BJ (cell line): ENCODE measurements at regions of chr1 and their contacts with region 1.

Region 1: DNA sequence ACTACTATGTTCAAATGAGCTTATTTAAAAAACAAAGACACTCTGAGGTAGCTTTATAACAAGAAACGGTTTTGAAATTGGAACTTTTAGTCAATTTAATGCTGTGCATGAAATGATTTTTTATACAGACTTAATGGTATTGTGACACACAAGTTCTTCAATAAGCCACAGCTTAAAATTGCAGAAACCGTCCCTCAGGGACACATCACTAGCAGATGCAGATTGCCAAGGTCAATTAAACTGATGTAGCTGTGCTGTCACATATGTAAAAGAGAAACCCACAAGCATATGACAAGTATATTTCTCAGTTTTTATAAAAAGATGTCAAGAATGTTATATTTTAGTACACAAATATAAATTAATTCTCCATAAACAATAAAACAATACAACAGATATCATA is 366.9 kb downstream of the DPYD start:
- DNase-seq: no peak
- H3K4me3 ChIP-seq: no peak overlapping the region
- H3K27me3 ChIP-seq: no peaks in the 10 kb centered on the region
- CTCF ChIP-seq: no peak

Region 2: DNA sequence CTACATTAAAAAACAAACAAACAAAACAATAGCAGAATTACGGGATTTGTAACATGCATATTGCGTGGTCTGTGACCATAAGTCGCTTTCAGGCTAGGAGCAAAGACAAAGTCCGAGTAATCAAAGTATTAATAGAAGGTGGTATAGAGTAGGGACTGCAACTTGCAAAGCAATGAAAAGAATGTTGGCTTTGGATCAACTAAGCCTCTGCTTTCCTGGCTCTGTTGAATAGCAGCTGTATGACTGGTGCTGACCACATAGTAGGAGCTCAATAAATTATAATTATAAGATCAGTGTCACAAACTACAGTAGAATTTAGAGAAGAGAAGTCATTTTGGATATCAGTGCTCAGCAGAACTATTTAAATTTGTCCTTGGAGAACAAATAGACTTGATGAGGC is 219.5 kb before region 1 on chr1:
- CTCF ChIA-PET with region 1: no interaction called
- POLR2A ChIA-PET with region 1: interaction called, 17 read pairs
- DNase-seq: peak; percentile 54
- H3K4me3 ChIP-seq: no peak overlapping the region
- H3K27me3 ChIP-seq: no peaks in the 10 kb centered on the region
- CTCF ChIP-seq: no peak

Region 3: GRCh38 chr1:97565886-97566285 is 11.9 kb after region 1 on chr1:
- CTCF ChIA-PET with region 1: no interaction called
- POLR2A ChIA-PET with region 1: no interaction called
- DNase-seq: no peak
- H3K4me3 ChIP-seq: no peak overlapping the region
- H3K27me3 ChIP-seq: no peaks in the 10 kb centered on the region
- CTCF ChIP-seq: no peak